GM10248 (cell line): ENCODE measurements at regions of chr10 and their contacts with region 1.

Region 1: DNA sequence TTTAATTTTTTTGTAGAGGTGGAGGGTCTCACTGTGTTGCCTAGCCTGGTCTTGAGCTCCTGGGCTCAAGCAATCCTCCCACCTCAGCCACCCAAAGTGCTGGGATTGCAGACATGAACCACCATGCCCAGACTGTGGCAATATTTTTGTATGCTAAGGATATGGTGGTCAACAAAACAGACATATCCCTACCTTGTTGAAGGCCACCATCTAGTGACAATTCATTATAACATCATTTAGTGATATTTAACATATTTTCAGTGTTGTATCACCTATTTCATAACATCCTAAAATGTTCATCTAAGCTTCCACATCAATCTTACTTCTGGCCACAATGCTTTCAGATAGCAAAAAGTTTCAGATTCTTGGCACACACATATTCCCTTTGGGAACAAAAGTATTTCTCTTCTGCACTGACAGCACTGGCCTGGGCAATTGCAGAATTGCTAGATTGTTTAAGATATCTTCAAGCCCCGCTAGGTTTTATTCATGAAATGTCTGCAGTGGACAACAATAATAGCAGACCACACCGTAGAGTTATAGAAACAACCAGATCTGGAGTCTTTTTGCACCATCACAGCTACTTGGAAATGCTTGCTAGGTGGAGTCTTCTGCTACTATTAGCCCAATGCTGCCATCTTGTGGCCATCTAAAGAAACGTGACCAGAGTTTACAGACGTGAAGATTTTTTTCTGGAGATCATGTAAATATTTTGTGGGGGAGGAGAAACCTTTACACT is 58.4 kb downstream of the DNAJC12 start:
- DNase-seq: peak; percentile 54
- CTCF ChIP-seq: peak; percentile 64

Region 2: GRCh38 chr10:67506082-67506756 is 273.4 kb before region 1 on chr10:
- CTCF ChIA-PET with region 1: no interaction called
- POLR2A ChIA-PET with region 1: no interaction called
- DNase-seq: no peak
- CTCF ChIP-seq: no peak

Region 3: DNA sequence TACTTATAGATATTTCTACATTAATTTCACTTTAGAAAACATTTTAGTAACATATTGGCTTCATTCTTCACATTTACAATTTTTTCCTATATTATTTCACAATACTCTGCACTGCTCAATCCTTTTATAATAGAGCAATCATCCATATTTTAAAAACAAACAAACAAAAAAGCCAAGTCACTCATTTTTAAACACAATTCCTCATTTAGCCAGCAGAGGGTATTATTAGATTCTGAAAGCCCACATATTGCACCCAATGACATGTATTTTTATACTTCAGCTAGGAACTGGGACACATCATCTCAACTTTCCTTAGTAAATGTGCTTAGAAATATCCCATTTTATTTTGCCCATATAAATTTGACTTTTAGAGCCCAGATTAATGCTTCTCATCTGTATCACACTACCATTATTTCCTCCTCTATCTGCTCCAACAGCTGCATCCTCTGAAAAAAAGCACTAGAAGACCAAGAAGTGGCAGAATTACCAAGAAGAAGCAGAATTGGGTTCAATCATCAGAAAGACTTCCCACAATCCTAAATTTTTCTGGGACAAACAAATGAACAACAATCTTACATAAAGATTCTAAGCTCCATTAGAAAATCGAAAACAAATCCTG is 113.1 kb before region 1 on chr10:
- CTCF ChIA-PET with region 1: interaction called, 89 read pairs
- POLR2A ChIA-PET with region 1: no interaction called
- DNase-seq: peak; percentile 14
- CTCF ChIP-seq: peak; percentile 42

Region 4: GRCh38 chr10:67705921-67706320 is 73.7 kb before region 1 on chr10:
- CTCF ChIA-PET with region 1: interaction called, 21 read pairs
- POLR2A ChIA-PET with region 1: no interaction called
- DNase-seq: no peak
- CTCF ChIP-seq: no peak

Region 5: DNA sequence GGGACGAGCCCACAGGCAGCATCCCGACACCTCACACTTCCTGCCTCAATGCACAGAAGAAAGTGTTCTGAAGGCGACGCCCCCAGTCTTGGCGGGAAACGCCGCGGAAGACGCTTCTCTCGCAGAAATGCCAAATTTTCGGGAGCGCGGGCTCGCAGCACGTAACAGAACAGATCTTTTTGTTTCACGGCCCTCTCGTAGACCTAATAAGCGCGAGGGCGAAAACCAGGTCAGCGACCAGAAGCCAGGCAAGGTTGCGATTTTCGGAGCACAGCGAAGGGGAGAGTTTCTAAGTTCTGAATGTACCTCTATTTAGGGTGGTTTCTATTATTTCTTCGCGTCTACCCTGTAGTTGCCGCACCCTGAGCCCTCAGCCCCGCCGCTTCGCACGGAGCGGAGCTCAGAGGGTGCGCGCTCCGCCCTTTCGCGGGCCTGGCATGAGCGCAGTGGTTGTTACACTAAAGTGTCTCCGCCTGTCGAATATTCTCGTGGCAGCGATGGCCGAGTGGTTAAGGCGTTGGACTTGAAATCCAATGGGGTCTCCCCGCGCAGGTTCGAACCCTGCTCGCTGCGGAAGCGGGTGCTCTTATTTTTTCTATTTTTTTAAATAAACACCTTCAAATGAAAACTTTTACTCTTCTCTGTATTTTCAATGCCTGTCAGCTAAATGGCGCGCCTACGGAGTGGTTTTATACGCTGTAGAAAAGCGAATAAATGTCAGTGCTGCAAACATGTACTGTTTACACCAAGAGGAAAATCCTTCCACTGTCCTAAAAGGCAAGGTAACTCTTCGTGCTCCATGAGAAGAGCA is 15.4 kb before region 1 on chr10:
- CTCF ChIA-PET with region 1: interaction called, 109 read pairs
- POLR2A ChIA-PET with region 1: no interaction called
- DNase-seq: peak; percentile 80
- CTCF ChIP-seq: no peak

Region 6: GRCh38 chr10:67803588-67804394 is 24.2 kb after region 1 on chr10:
- CTCF ChIA-PET with region 1: no interaction called
- POLR2A ChIA-PET with region 1: no interaction called
- DNase-seq: peak; percentile 52
- CTCF ChIP-seq: no peak

Region 7: DNA sequence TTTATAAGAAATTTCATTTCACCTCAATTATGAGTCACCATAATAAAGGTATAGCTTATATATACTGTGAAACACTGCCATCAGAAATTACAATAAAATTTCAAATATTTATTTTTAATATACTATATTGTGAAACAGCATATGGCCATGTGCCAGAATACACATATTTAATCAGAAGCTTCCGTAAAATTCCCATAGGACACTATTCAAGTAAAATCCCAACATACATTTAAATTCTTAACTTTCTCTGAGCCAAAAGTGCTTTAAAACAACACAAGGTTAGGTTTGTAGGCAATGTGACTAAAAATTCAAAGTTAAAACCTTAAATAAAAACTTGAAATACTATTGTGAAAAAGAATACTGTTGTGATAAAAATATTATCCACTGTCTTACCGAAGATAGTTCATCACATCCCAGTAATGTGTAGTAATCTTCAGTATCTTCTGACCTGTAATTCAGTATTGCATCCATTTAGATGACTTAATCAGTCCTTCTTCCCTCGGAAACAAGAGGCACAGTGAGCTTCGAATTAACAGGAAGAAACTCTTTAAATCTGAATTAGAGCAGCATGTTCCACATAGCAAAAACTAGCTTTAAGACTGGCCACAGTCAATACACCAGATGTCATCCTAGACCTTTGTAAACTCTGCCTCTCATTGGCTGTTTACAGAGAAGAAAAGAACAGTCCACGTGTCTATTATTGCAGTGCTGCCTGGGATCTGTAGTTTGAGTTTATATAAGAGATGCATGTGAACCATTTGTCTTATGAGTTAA is 58.1 kb after region 1 on chr10 and contains the start of gene DNAJC12:
- CTCF ChIA-PET with region 1: no interaction called
- POLR2A ChIA-PET with region 1: no interaction called
- DNase-seq: peak; percentile 19
- CTCF ChIP-seq: no peak

Region 8: GRCh38 chr10:67988606-67989005 is 209.0 kb after region 1 on chr10:
- CTCF ChIA-PET with region 1: no interaction called
- POLR2A ChIA-PET with region 1: no interaction called
- DNase-seq: no peak
- CTCF ChIP-seq: no peak